Left ventricle myocardium superior (tissue), 1 donor: ENCODE measurements at regions of chr7 and their contacts with region 1.

Region 1: DNA sequence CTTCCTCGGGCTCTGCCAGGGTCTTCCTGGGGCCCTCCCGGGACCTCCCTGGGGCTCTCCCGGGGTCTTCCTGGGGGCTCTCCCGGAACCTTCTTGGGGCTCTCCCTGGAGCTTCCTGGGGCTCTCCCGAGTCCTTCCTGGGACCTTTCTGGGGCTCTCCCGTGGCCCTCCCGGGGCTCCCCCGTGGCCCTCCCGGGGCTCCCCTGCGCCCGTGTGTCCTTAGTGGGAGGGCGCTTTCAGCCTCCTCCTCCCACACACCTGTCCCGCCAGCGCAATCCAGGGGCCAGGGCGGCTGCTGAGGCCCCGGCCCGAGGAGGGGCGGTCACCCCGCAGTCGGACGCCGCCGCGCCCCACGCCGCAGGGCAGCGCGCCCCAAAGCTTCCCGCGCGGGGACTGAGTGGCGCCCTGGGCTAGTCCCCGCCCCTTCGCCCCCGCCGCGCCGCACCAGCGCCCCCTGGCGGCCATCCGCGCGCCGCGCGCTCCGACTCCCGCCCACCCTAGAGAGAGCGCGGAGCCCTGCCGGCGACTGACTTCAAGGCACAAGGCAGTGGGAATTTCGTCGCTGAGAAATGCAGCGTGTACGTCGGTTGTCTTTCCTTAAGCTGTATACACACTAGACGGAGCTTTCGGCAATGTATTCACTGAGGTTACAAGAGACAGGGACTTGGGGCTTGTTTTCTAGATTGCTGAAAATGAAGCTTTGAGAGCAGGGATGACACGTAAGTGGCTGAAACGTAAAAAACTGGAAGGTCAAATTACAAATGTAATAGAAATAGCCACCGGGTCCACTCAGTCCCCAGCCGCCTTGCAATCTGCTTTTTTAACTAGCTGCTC is 47.1 kb downstream of the INSIG1 start:
- DNase-seq: peak; percentile 88
- ATAC-seq: peak; percentile 99

Region 2: GRCh38 chr7:154927624-154928143 is 417.1 kb before region 1 on chr7:
- intact Hi-C with region 1: loop called (anchors 10 kb)
- DNase-seq: peak; percentile 49
- ATAC-seq: peak; percentile 92

Region 3: GRCh38 chr7:155190688-155191087 is 154.1 kb before region 1 on chr7:
- intact Hi-C with region 1: loop called (anchors 10 kb)
- DNase-seq: peak; percentile 62
- ATAC-seq: peak; percentile 66